Activated CD4-positive, alpha-beta memory T cell treated with anti-CD3 and anti-CD28 coated beads, Interleukin-2, amount 10 ng/mL, durations not matched to agents 7 days and 5 days (primary cell): ENCODE measurements at regions of chr1 and their contacts with region 1.

Region 1: GRCh38 chr1:205711104-205712020 is 31.1 kb upstream of the SLC45A3 start:
- DNase-seq: peak; percentile 64
- H3K4me3 Mint-ChIP-seq: no peak overlapping the region
- H3K27ac Mint-ChIP-seq: peak overlapping the region; percentile 1
- H3K4me1 Mint-ChIP-seq: peaks cover 15% of the 10 kb centered on the region
- H3K27me3 Mint-ChIP-seq: no peaks in the 10 kb centered on the region

Region 2: GRCh38 chr1:205591522-205592351 is 119.6 kb before region 1 on chr1:
- CTCF ChIA-PET with region 1: interaction called, 37 read pairs
- POLR2A ChIA-PET with region 1: no interaction called
- DNase-seq: peak; percentile 89
- H3K4me3 Mint-ChIP-seq: peak overlapping the region; percentile 74
- H3K27ac Mint-ChIP-seq: peak overlapping the region; percentile 64
- H3K4me1 Mint-ChIP-seq: peaks cover 44% of the 10 kb centered on the region
- H3K27me3 Mint-ChIP-seq: no peaks in the 10 kb centered on the region

Region 3: GRCh38 chr1:205729945-205730610 is 18.7 kb after region 1 on chr1:
- CTCF ChIA-PET with region 1: interaction called, 41 read pairs
- POLR2A ChIA-PET with region 1: interaction called, 6 read pairs
- DNase-seq: no peak
- H3K4me3 Mint-ChIP-seq: no peak overlapping the region
- H3K27ac Mint-ChIP-seq: no peak overlapping the region
- H3K4me1 Mint-ChIP-seq: peaks cover 25% of the 10 kb centered on the region
- H3K27me3 Mint-ChIP-seq: no peaks in the 10 kb centered on the region

Region 4: DNA sequence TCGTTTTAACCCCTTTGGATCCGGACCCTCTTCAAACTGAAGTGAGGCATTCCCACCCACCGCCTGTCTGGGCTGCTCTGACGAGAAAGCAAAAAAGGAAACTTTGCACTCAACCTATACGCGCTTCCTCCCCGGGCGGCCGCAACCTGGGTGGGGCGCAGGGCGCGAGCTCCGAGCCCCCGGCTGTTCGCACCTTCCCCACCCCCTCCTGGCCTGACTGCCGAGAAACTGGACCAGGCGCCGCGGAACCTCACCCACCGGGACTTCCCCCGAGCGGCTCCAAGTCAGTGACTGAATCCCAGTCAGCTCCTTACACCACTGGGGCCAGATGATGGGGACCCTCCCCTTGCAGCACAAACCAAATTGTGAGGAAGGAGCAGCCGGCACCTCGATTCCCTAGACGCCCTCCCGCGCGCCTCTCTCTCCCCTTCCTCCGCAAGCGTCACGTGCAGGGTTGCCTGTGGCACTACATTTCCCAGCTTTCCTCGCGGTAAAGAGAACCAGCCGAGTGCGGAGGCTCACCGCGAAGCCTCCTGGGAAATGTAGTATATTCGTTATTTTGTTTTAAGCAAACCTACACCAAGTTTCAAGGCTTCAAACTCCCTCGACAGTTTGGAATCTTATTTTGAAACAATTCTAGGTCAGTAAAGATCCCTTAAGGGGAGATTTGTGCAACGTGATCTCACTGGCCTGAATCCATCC is 63.8 kb after region 1 on chr1 and contains the start of gene RAB29:
- CTCF ChIA-PET with region 1: interaction called, 4 read pairs
- POLR2A ChIA-PET with region 1: interaction called, 11 read pairs
- DNase-seq: peak; percentile 92
- H3K4me3 Mint-ChIP-seq: peak within 1 kb of the TSS; percentile 90
- H3K27ac Mint-ChIP-seq: peak within 1 kb of the TSS; percentile 87
- H3K4me1 Mint-ChIP-seq: peaks cover 57% of the 10 kb centered on the region
- H3K27me3 Mint-ChIP-seq: no peaks in the 10 kb centered on the region
- total RNA-seq, gene RAB29: 67.6 to 72.3 TPM

Region 5: DNA sequence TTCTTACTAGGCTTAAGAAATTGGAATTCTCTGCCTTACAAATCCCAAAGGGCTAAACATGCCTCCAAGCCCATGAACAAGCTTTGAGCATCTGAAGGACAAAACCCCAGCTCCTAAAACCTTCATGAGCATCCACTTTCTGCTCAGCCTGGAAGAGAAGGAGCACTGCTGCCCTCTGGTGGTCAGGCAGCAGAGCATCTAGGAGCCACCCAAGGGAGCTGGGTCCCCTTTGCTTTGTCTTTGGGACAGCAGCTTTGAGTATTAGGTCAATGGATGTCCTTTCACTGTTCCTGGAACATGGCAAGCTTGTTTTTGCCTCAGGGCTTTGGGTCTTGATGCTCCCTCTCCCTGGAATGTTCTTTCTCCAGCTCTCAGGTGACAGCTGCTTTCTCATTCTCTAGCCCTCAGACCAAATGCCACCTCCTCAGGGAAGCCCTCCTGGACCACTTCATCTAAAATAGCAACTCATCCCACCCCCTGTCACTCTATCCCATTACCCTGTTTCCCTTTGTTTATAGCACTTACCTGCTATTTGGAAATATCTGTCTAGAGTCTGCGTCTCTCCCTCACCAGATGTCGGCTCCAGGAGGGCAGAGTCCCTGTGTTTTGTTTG is 266.1 kb after region 1 on chr1:
- CTCF ChIA-PET with region 1: interaction called, 19 read pairs
- POLR2A ChIA-PET with region 1: no interaction called
- DNase-seq: peak; percentile 76
- H3K4me3 Mint-ChIP-seq: no peak overlapping the region
- H3K27ac Mint-ChIP-seq: no peak overlapping the region
- H3K4me1 Mint-ChIP-seq: no peaks in the 10 kb centered on the region
- H3K27me3 Mint-ChIP-seq: peaks cover 9% of the 10 kb centered on the region